Gastrocnemius medialis (tissue), 4 donors: ENCODE measurements at regions of chr1 and their contacts with region 1.

Region 1: DNA sequence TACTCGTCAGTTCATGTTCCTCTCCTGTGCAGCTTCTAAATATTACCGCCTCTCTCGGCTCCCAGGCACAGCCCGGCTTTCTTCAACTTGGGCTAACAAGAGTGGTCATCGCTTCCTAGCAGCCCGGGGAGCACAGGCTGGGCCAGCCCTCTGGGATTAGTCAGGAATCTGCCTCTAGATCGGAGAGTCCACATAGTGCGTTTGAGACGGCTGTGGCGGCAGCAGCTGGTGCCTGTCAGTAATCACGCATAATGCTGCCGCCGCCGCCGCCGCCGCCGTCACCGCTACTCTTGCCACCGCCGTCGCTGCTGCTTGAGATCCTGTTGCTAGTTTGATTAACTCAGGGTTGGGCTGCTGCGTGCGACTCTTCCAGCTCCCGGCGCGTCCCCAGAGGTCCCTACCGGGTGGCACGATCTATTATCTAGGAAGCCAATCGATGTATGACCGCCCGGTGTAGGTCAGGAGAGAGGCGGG is at the start of gene RXRG:
- DNase-seq: peak; percentile 58 to 77
- ATAC-seq: peak; percentile 66 to 80
- H3K4me3 ChIP-seq: peak within 1 kb of the TSS; percentile 59 to 71 (median 63)
- H3K27ac ChIP-seq: peak within 1 kb of the TSS; percentile 77 to 88 (median 84)
- H3K4me1 ChIP-seq: peaks cover 13 to 18% of the 10 kb centered on the region in 2 donors
- H3K27me3 ChIP-seq: no peaks in the 10 kb centered on the region
- CTCF ChIP-seq: no peak
- POLR2A ChIP-seq: peak in 1 of 2 donors; percentile 46
- total RNA-seq, gene RXRG: 4.2 to 15.9 (median 6.0) TPM

Region 2: DNA sequence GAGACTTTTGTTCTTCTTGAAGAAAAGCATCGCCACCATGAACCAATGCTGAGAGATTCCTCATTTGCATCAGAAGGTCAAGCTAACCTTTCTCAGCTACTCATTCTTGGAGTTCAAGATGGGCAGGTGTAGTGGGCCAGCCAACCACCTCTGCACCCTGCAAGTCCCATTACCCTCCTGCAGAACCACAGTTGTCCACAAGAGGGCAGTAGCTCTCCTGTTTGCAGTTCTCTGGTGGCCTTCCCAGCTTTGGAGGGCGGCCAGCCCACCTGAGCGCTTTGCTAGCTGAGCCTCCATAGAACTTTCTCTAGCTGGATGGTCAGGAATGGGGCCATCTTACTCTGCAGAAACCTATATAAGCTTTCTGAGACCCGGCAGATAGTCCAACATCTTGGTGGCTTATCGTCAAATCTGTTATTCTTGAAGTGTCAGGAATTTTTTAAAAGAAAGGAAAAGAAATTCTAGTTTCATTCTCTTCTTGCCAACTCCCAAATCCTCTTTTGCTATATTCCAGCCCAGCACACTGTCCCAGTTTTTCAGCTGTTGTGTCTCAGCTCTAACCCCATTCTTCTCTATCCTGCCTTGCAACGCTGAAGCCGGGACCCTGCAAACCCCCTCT is 77.5 kb before region 1 on chr1:
- in situ Hi-C with region 1: no loop called
- intact Hi-C with region 1: loop called (anchors 10 kb)
- DNase-seq: peak; percentile 45 to 80
- ATAC-seq: peak in 1 of 2 donors; percentile 28
- H3K4me3 ChIP-seq: no peak overlapping the region
- H3K27ac ChIP-seq: no peak overlapping the region
- H3K4me1 ChIP-seq: peaks cover 6 to 13% of the 10 kb centered on the region in 2 donors
- H3K27me3 ChIP-seq: no peaks in the 10 kb centered on the region
- CTCF ChIP-seq: peak; percentile 82 to 97 (median 89)
- POLR2A ChIP-seq: no peak

Region 3: DNA sequence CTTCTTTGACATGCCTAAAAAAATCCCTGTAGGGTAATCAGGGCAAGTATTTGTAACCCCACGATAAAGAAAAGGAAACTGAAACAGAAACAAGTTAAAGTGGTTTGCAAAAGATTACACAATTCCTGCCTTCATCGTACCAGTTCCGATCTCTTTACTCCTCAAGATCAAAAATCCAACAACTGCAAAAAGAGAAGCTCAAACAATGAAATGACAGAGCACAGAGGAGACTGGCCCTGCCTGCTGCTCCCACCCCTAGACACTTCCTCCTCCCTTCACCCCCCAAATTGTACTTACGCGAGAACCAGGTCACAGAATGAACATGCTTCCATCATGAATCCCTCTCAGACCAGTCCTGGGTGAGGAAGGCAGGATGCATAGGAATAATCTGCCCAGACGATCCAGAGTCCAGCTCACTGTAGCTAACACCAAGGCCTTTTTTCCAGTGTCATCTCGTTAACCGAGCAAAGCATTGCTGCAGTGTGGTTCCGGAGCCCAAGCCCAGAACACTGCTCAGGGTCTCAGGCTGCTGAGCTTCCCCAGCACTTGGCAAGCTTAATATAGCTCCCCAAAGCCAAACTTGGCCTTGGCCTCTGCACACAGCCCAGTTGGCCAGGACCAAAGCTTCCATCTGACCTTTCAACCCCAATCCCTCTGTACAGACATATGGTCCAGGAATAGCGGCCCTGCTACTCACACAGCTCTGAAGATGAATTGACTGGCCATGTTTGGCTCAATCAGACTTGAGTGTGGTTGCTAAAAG is 20.3 kb before region 1 on chr1:
- in situ Hi-C with region 1: no loop called
- intact Hi-C with region 1: loop called (anchors 2 kb)
- DNase-seq: no peak
- ATAC-seq: peak; percentile 43 to 73
- H3K4me3 ChIP-seq: peak overlapping the region; percentile 24 to 53 (median 36)
- H3K27ac ChIP-seq: peak overlapping the region; percentile 70 to 84 (median 78)
- H3K4me1 ChIP-seq: peaks cover 67 to 73% of the 10 kb centered on the region in 2 donors
- H3K27me3 ChIP-seq: no peaks in the 10 kb centered on the region
- CTCF ChIP-seq: no peak
- POLR2A ChIP-seq: no peak

Region 4: GRCh38 chr1:165486663-165487062 is 41.7 kb after region 1 on chr1:
- in situ Hi-C with region 1: no loop called
- intact Hi-C with region 1: loop called (anchors 5 kb)
- DNase-seq: no peak
- ATAC-seq: no peak
- H3K4me3 ChIP-seq: no peak overlapping the region
- H3K27ac ChIP-seq: no peak overlapping the region
- H3K4me1 ChIP-seq: peaks cover 10 to 29% of the 10 kb centered on the region in 2 donors
- H3K27me3 ChIP-seq: no peaks in the 10 kb centered on the region
- CTCF ChIP-seq: no peak
- POLR2A ChIP-seq: no peak

Region 5: GRCh38 chr1:165501970-165502348 is 57.0 kb after region 1 on chr1:
- in situ Hi-C with region 1: no loop called
- intact Hi-C with region 1: loop called (anchors 2 kb)
- DNase-seq: peak; percentile 19 to 33
- ATAC-seq: peak; percentile 63 to 65
- H3K4me3 ChIP-seq: no peak overlapping the region
- H3K27ac ChIP-seq: peak overlapping the region; percentile 81 to 89 (median 84)
- H3K4me1 ChIP-seq: peaks cover 19 to 20% of the 10 kb centered on the region in 2 donors
- H3K27me3 ChIP-seq: no peaks in the 10 kb centered on the region
- CTCF ChIP-seq: no peak
- POLR2A ChIP-seq: no peak